Ovary (tissue), 10 donors: ENCODE measurements at regions of chr3 and their contacts with region 1.

Region 1: DNA sequence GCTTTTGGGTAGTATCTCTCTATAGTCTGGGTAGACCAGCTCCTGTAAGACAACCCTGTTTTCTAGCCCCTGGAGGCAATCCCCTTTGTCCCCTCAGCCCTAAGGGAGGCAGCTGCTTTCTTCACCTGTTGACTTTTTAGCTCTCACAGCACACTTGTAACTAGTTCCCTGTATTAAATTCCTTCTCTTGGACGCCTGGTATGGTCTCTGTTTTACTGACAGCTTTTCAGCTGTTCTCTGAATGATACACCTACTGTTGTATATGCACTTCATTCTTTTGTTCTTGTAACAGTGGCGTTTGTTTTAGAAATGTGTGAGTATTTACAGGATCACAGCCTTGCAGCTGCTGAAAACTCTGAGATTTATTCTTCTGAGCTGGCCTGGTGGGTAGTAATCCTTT is 413.0 kb upstream of the RBMS3 start:
- DNase-seq: no peak
- H3K4me3 ChIP-seq: no peak overlapping the region
- H3K27ac ChIP-seq: no peak overlapping the region
- H3K4me1 ChIP-seq: no peaks in the 10 kb centered on the region
- H3K27me3 ChIP-seq: no peaks in the 10 kb centered on the region
- CTCF ChIP-seq: no peak
- EP300 ChIP-seq: no peak
- POLR2A ChIP-seq: no peak

Region 2: DNA sequence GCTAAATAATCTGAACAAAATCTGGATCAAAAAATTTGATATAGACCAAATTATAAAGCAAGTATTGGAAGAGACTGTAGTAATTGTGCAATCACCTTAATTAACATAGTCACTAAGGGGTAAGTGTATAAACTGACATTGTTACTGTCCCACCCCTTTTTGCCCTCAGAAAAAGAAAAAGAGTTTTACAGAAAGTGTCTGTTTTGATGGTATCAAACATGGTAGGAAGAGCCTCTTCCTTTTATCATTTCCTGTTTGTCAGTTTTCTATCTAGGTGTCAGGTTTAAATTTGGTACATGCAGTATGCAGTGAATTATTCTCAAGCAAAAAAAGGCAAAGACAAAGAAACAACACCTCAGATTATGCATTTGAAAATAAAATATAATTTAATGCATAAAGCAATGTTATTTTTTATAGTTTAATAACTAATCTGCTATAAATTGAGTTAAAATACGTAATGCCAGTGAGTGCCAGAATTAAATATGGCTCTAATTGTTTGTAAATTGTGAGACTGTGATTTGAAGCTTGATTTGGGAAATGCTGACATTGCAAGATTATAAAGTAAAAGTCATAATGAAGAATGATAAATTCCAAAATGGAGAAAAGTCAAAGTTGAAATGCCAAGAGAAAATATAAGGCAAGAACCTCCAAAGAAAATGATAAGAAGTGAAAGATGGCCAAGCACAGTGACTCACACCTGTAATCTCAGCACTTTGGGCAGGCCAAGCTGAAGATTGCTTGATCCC is 656.7 kb before region 1 on chr3:
- intact Hi-C with region 1: loop called in 1 of 4 experiments (anchors 5 kb)
- DNase-seq: no peak
- H3K4me3 ChIP-seq: no peak overlapping the region
- H3K27ac ChIP-seq: no peak overlapping the region
- H3K4me1 ChIP-seq: no peaks in the 10 kb centered on the region
- H3K27me3 ChIP-seq: no peaks in the 10 kb centered on the region
- CTCF ChIP-seq: no peak
- EP300 ChIP-seq: no peak
- POLR2A ChIP-seq: no peak

Region 3: DNA sequence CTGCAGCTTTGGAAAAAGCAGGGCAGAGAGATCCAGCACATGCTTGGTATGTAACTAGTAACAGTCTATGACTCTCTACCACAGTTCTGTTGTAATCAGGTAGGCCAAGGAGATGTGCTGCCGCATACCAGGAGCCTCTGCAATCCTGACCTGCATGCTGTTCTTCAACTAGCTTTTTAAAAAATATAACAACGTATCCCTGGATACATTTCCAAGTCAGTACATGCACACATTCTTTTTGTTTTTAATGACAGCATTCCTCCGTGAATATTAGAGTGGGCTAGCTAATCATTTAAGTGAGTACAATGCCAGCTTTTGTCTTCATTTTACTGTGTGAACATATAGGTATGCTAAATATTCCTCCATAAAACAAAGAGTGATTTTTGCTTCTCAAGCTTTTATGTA is 850.8 kb after region 1 on chr3:
- intact Hi-C with region 1: no loop called
- DNase-seq: no peak
- H3K4me3 ChIP-seq: no peak overlapping the region
- H3K27ac ChIP-seq: no peak overlapping the region
- H3K4me1 ChIP-seq: no peaks in the 10 kb centered on the region
- H3K27me3 ChIP-seq: no peaks in the 10 kb centered on the region
- CTCF ChIP-seq: no peak
- EP300 ChIP-seq: no peak
- POLR2A ChIP-seq: no peak